ENCODE measurements at regions of chr16 and their contacts with region 1.

Region 1: GRCh38 chr16:6206080-6206479 is 1108.5 kb upstream of the EEF2KMT start:
- DNase-seq: no peak
- H3K4me3 ChIP-seq: no peak overlapping the region
- H3K27ac ChIP-seq: no peak overlapping the region
- H3K4me1 ChIP-seq: no peaks in the 10 kb centered on the region
- H3K27me3 ChIP-seq: no peaks in the 10 kb centered on the region
- CTCF ChIP-seq: no peak
- POLR2A ChIP-seq: no peak

Region 2: GRCh38 chr16:5918567-5919127 is 287.4 kb before region 1 on chr16:
- intact Hi-C with region 1: no loop called
- DNase-seq: no peak
- H3K4me3 ChIP-seq: no peak overlapping the region
- H3K27ac ChIP-seq: no peak overlapping the region
- H3K4me1 ChIP-seq: no peaks in the 10 kb centered on the region
- H3K27me3 ChIP-seq: no peaks in the 10 kb centered on the region
- CTCF ChIP-seq: no peak
- POLR2A ChIP-seq: no peak

Region 3: GRCh38 chr16:6125483-6126259 is 80.4 kb before region 1 on chr16:
- intact Hi-C with region 1: no loop called
- DNase-seq: no peak
- H3K4me3 ChIP-seq: no peak overlapping the region
- H3K27ac ChIP-seq: no peak overlapping the region
- H3K4me1 ChIP-seq: no peaks in the 10 kb centered on the region
- H3K27me3 ChIP-seq: no peaks in the 10 kb centered on the region
- CTCF ChIP-seq: no peak
- POLR2A ChIP-seq: no peak

Region 4: GRCh38 chr16:6279286-6279685 is 73.2 kb after region 1 on chr16:
- intact Hi-C with region 1: loop called (anchors 10 kb)
- DNase-seq: no peak
- H3K4me3 ChIP-seq: no peak overlapping the region
- H3K27ac ChIP-seq: no peak overlapping the region
- H3K4me1 ChIP-seq: no peaks in the 10 kb centered on the region
- H3K27me3 ChIP-seq: no peaks in the 10 kb centered on the region
- CTCF ChIP-seq: no peak
- POLR2A ChIP-seq: no peak